PC-9 (cell line): ENCODE measurements at regions of chr16 and their contacts with region 1.

Region 1: DNA sequence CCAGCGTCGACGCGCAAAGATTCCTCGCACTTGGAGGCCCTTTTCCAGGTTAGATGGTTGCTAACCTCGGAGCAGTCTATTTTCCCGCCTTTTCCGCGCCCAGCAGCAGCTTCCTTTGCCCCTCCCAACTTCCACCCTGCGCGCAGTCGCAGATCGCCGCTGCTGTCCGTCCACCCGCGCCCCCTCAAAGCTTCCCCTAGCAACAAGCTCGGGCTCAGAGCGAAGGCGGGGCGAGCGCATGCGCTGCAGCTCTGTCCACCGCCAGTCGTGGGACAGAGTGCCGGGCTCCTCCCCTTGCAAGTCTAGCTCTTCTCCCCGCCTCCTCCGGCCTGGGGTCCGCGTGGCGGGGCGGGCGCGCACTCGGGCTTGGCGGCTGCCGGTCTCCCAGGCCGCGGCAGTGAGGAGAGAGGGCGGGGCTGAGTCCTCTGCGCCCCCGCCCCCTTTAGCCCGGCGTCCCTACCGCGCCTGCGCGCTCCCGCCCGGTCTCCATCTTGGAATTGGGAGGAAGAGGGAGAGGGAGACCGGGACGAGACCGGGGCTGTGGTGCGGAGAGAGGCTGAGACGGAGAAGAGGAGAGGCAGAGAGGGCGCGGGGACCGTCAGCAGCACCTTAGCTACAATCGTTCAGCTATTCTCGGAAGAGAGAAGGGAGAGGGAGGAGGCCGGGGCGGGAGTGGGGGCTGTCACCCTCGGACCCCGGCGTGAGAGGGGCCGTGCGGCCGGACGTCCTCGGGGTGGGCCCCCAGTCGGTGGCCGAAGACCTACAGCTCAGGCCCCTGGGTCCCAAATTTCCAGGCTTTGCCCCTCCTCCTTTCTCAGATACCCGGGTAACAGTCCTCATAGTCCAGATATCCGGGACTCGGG is at the start of gene TAOK2:
- DNase-seq: peak; percentile 95 to 100
- H3K4me3 ChIP-seq: peak within 1 kb of the TSS; percentile 84
- H3K27ac ChIP-seq: peak within 1 kb of the TSS; percentile 8; the same call in 1 of the 2 replicates
- H3K4me1 ChIP-seq: peaks cover 19% of the 10 kb centered on the region
- H3K27me3 ChIP-seq: no peaks in the 10 kb centered on the region
- CTCF ChIP-seq: no peak
- total RNA-seq, gene TAOK2: 76.6 and 82.9 TPM in 2 replicates

Region 2: DNA sequence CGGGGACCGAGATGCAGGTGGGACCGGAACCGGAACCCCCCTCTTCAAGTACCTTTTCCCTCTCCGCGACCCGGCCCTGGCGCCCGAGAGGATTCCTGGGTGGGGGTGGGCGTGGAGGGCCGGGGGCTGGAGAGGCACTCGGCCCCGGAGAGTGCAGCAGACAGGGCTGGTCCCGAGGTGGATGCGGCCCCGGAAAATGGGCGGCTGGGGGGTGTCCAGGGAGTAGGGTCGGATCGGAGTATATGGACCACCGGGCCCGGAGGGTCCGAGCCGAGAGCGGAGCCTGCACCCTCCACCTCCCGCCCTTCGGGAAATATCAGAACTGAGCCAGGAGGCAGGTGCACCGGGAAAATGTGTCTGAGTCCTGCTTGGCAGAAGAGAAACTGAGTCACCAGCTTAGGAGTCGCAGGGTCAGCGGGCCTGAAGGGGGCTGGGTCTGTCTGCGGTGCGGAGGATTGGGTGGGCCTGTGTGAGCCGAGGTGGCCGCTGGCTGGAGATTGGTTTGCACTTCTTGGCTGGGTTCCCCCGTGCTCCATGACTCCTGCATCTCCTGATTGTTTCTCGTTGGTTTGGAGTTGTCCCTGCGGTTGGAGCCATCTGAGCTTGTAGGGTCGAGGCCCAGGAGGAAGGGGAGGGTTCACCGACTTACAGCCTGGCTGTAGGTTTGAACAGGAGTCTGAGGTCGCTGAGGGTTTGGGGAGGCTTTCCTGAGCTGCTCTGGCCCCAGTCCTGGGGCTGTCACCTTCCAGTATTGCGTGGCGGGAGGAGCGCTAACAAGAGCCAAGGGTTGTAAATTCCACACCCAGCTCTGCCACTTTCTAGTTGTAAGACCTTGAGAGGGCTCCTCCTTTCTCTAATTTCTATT is 1109.5 kb before region 1 on chr16:
- CTCF ChIA-PET with region 1: no interaction called
- POLR2A ChIA-PET with region 1: interaction called, 10 read pairs
- intact Hi-C with region 1: no loop called
- DNase-seq: peak in 1 of 2 experiments; percentile 18
- H3K4me3 ChIP-seq: peak overlapping the region; percentile 67
- H3K27ac ChIP-seq: peak overlapping the region; percentile 66
- H3K4me1 ChIP-seq: peaks cover 20% of the 10 kb centered on the region
- H3K27me3 ChIP-seq: no peaks in the 10 kb centered on the region
- CTCF ChIP-seq: no peak

Region 3: GRCh38 chr16:29825145-29826044 is 148.2 kb before region 1 on chr16:
- CTCF ChIA-PET with region 1: no interaction called
- POLR2A ChIA-PET with region 1: interaction called, 11 read pairs
- intact Hi-C with region 1: no loop called
- DNase-seq: peak; percentile 66 to 74
- H3K4me3 ChIP-seq: no peak overlapping the region; the same call in 1 of the 2 replicates
- H3K27ac ChIP-seq: peak overlapping the region; percentile 59
- H3K4me1 ChIP-seq: peaks cover 53% of the 10 kb centered on the region
- H3K27me3 ChIP-seq: no peaks in the 10 kb centered on the region
- CTCF ChIP-seq: no peak

Region 4: GRCh38 chr16:29900102-29900887 is 73.3 kb before region 1 on chr16 and contains the start of gene ASPHD1:
- CTCF ChIA-PET with region 1: interaction called, 6 read pairs
- POLR2A ChIA-PET with region 1: interaction called, 30 read pairs
- intact Hi-C with region 1: loop called (anchors 1 kb)
- DNase-seq: peak; percentile 62 to 86
- H3K4me3 ChIP-seq: peak within 1 kb of the TSS; percentile 72
- H3K27ac ChIP-seq: peak within 1 kb of the TSS; percentile 51
- H3K4me1 ChIP-seq: peaks cover 16% of the 10 kb centered on the region; the same call in 1 of the 2 replicates
- H3K27me3 ChIP-seq: no peaks in the 10 kb centered on the region
- CTCF ChIP-seq: no peak
- total RNA-seq, gene ASPHD1: 8.3 and 11.3 TPM in 2 replicates

Region 5: DNA sequence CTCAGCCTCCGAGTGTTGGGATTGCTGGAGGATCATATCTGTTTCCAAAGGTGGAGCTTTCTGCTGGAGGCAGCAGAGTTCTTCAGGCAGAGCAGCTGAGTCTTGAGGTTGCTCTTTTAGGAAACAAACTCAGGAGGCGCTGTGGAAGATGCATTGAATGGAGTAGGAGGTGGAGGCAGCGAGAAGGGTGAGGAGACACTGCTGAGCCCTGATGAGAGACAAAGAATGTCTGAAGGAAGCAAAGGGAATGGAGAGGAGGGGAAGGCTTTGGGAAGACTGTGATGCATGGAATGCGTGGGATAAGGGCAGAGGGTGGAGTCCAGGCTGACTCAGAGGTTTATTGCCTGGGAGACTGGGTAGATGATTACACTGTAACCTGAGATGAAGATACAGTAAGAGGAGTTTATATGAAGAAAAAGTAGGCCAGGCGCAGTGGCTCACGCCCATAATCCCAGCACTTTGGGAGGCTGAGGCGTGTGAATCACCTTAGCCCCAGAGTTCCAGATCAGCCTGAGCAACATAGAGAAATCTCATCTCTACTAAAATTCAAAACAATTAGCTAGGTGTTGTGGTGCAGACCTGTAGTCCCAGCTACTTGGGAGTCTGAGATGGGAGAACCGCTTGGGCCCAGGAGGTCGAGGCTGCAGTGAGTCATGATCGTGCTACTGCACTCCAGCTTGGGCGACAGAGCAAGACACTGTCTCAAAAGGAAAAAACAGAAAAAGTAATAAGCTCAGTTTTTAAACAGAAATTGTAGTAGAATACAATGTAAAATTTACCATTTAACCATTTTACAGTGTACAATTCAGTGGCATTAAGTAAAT is 29.6 kb before region 1 on chr16:
- CTCF ChIA-PET with region 1: no interaction called
- POLR2A ChIA-PET with region 1: interaction called, 8 read pairs
- intact Hi-C with region 1: loop called (anchors 1 kb)
- DNase-seq: peak; percentile 92 to 99
- H3K4me3 ChIP-seq: peak overlapping the region; percentile 47; the same call in 1 of the 2 replicates
- H3K27ac ChIP-seq: peak overlapping the region; percentile 94
- H3K4me1 ChIP-seq: peaks cover 26% of the 10 kb centered on the region
- H3K27me3 ChIP-seq: no peaks in the 10 kb centered on the region
- CTCF ChIP-seq: peak; percentile 69

Region 6: DNA sequence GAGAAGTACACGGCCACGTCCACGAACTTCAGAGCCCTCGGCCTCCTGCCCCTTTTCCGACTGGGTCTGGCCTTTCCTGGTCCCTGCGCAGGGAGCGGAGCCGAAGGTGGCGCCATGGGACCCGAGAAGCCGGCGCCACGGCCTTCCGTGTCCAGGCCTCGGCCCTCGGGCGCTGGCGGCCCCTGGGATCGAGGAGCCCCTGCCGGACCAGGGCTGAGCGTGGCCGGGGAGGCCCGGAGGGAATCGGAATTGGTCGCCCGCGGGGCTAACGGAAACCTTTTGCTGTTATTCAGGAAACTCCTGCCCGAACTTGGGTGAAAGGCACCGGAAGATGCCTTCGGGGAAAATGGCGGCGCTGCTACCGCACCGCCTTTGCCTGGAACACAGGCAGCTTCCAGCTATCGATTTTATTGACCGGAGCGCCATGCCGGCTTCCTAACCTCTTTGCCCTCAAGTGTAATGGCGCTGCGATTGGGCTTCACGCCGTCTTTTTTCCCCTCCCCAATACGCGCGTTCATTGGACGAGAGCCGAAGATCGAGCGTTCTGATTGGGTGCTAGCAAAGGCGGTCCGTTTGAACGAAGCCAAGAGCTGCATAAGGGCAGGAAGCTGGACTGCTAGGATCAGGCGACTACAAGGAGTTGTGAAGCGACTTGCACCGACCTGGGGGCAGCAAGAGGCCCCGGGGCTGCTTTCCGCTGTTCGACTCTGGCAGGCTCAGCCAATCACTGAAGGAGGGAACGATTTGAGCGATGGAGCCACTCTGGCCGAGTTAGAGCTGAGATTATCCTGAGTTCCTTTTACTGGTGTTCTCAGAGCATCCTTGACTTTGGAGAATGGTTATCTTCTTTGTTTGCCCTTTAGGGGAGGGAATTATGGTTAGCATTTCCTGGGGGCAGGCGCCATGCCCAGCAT is 636.6 kb after region 1 on chr16 and contains the start of gene ZNF689:
- CTCF ChIA-PET with region 1: no interaction called
- POLR2A ChIA-PET with region 1: interaction called, 19 read pairs
- intact Hi-C with region 1: no loop called
- DNase-seq: peak; percentile 88 to 98
- H3K4me3 ChIP-seq: peak within 1 kb of the TSS; percentile 89
- H3K27ac ChIP-seq: peak within 1 kb of the TSS; percentile 49
- H3K4me1 ChIP-seq: peaks cover 5% of the 10 kb centered on the region; the same call in 1 of the 2 replicates
- H3K27me3 ChIP-seq: no peaks in the 10 kb centered on the region
- CTCF ChIP-seq: no peak; the same call in 1 of the 2 replicates
- total RNA-seq, gene ZNF689: 9.1 and 10.1 TPM in 2 replicates